ENCODE measurements at regions of chr1 and their contacts with region 1.

Region 1: GRCh38 chr1:16206547-16207317 is 5.7 kb downstream of the ARHGEF19 start:
- DNase-seq: peak; percentile 95
- H3K4me3 Mint-ChIP-seq: peak overlapping the region; percentile 81
- H3K27ac Mint-ChIP-seq: peak overlapping the region; percentile 99
- H3K4me1 Mint-ChIP-seq: peaks cover 19% of the 10 kb centered on the region
- H3K27me3 Mint-ChIP-seq: no peaks in the 10 kb centered on the region

Region 2: DNA sequence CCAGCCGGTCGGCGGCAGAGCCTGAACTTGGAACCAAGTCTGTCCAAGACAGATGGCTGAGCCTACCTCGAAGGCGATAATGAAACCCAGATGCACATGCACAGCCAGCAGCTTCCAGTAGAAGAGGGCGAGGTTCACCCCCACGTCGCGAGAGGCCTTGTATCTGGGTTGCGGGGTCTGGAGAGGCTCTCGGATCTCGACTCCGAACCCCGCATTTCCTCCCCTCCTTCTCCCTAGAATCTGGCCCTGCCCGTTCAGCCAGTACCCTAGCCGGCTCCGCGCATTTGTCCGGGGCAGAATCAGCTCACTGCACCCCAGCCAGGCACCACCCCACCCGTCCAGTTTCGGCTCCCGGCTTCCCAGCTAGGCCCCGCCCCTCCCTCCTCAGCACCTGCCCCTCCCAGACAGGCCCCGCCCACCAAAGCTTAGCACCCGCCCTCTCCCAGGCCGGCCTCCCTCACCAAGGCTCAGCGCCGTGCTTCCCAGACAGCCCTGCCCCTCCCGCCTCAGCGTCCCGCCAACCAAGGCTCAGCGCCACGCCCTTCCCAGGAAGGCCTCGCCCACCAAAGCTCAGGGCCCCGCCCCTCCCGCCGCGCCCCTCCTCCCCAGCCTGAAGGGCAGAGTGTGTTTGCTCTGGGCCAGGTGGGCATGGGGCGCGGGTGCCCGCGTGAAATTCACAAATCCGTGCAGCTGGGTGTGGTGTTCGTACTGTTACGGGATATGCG is 10.5 kb after region 1 on chr1:
- CTCF ChIA-PET with region 1: interaction called, 12 read pairs
- POLR2A ChIA-PET with region 1: interaction called, 40 read pairs
- DNase-seq: peak; percentile 97
- H3K4me3 Mint-ChIP-seq: peak overlapping the region; percentile 86
- H3K27ac Mint-ChIP-seq: peak overlapping the region; percentile 59
- H3K4me1 Mint-ChIP-seq: peaks cover 34% of the 10 kb centered on the region
- H3K27me3 Mint-ChIP-seq: peaks cover 13% of the 10 kb centered on the region

Region 3: DNA sequence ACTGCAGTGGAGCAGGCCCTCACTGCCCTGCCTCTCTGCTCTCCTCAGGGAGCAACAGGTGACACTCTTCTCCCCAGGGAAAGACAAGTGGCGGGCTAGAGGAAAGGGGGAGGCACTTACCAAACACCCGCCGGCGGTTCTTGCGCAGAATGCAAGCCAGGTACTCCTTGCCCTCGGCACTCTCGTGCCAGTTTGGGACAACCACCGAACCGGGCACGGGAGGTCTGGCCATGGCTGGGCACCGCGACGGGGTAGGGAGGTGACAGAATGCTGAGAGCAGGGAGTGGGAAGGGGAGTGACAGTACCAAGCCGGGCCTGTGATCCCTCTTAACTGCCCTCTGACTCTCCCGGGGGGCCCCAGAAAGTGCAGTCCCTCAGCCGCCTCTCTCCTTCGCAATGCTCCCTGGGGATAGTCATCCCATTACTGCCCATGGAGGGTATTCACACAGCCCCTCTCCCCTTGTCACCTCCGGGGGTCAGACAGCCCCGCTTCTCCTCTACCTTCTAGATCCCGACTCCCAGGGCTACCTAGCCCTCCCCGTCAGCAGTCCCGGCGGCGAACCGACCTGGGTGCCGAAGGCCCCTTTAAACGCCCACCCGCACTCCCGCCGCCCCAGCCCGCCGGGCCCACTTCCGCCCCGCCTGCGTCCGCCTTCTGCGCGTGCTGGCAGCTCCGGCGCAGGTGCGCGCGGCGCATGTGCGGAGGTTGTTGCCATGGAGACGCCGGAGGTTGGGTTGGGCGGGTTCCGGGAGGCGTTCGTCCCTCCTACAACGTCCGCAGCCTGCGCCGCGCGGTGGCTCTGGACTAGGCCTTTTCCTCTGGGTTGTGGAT is 30.0 kb after region 1 on chr1 and contains the start of gene CPLANE2:
- CTCF ChIA-PET with region 1: interaction called, 4 read pairs
- POLR2A ChIA-PET with region 1: interaction called, 21 read pairs
- DNase-seq: peak; percentile 97
- H3K4me3 Mint-ChIP-seq: peak within 1 kb of the TSS; percentile 79
- H3K27ac Mint-ChIP-seq: peak within 1 kb of the TSS; percentile 82
- H3K4me1 Mint-ChIP-seq: peaks cover 43% of the 10 kb centered on the region
- H3K27me3 Mint-ChIP-seq: no peaks in the 10 kb centered on the region
- total RNA-seq, gene CPLANE2: 7.9 to 8.7 TPM

Region 4: DNA sequence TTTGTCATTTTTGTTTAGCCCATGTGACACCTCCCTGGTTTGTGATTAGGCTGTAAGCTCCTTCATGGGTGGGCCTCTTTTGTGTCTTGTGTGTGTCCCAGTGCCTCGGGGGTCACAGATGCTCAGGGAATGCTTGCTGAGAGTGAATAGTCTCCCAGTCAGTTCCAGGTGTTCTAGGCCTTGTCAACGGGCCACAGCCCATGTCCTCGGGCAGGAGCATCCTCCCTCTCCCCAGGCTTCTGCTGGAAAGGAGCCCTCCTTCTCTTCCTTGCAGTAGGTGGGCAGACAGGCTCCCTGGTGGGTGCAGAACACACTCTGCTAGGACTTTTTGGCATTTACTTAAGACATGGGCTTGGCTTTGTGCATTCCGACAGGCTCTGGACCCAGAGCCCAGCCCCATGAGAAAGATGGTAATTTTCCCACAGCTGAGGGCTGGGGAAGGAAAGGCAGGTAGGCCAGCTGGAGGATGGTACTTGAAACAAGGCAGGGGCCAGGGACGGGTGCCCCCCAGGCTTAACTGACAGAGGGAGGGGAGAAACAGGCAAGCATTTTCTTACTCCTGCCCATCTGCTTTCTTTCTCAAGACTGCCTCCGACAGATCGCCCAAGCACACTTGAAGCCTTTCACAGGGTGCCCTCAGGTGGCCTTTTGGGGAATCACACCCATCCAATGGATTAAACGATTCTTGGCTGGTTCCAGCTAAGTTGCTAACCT is 37.4 kb after region 1 on chr1:
- CTCF ChIA-PET with region 1: interaction called, 17 read pairs
- POLR2A ChIA-PET with region 1: no interaction called
- DNase-seq: peak; percentile 81
- H3K4me3 Mint-ChIP-seq: no peak overlapping the region
- H3K27ac Mint-ChIP-seq: no peak overlapping the region
- H3K4me1 Mint-ChIP-seq: peaks cover 18% of the 10 kb centered on the region
- H3K27me3 Mint-ChIP-seq: no peaks in the 10 kb centered on the region